ENCODE measurements at regions of chr16 and their contacts with region 1.

Region 1: DNA sequence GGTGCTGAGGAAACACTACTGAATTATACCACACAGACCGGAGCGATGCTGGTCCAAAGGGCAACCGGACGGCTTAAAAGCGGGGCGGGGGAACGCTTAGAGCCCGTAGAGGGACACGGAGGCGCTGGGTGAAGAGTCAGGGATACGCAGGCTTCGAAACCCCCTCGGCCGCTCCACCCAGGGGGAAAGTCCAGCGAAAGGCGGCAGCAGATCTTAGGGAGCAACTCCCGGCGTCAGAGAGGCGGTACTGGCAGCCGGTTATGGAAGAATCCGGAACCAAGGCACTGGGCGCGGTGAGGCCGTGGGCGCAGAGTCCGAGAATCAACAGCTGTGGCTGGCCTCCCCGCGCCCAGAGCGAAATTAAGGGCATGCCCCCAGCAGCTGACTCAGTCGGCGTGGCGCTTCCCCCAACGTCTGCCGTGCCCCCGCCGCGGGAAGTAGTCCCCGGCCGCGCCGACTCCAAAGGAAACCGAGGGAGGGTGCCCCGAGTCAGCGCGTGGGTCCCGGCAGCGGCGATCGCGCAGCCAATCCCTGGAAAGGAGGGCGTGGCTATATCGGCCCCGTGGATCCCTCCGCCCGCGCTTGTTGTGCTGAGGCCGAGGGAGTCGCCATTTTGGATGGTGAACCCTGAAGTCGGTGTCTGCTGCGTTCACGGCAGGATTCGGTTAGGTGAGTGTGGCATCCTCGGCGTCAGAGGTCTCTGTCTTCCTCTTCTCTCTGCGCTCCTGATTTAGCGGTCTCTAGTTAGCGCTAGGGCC is at the start of gene IST1:
- DNase-seq: peak; percentile 88 to 95
- H3K4me3 ChIP-seq: peak within 1 kb of the TSS; percentile 90 to 95 (median 94)
- H3K27ac ChIP-seq: peak within 1 kb of the TSS; percentile 94
- H3K4me1 ChIP-seq: peaks cover 0 to 4% (median 0%) of the 10 kb centered on the region in 4 experiments; a peak in 2 of 7 replicates
- H3K27me3 ChIP-seq: no peaks in the 10 kb centered on the region
- CTCF ChIP-seq: no peak
- EP300 ChIP-seq: no peak
- POLR2A ChIP-seq: peak; percentile 76 to 89
- RAD21 ChIP-seq: no peak
- total RNA-seq, gene IST1: 245 and 248 TPM in 2 replicates

Region 2: GRCh38 chr16:71912534-71913253 is 17.6 kb after region 1 on chr16:
- CTCF ChIA-PET with region 1: interaction called, 3 read pairs
- POLR2A ChIA-PET with region 1: interaction called, 12 read pairs
- DNase-seq: no peak
- H3K4me3 ChIP-seq: no peak overlapping the region
- H3K27ac ChIP-seq: no peak overlapping the region
- H3K4me1 ChIP-seq: peaks cover 0 to 2% (median under 1%) of the 10 kb centered on the region in 4 experiments; a peak in 5 of 7 replicates
- H3K27me3 ChIP-seq: no peaks in the 10 kb centered on the region
- CTCF ChIP-seq: no peak
- EP300 ChIP-seq: no peak
- POLR2A ChIP-seq: no peak
- RAD21 ChIP-seq: no peak

Measured in H1 (cell line).